ENCODE measurements at regions of chr9 and their contacts with region 1.

Region 1: DNA sequence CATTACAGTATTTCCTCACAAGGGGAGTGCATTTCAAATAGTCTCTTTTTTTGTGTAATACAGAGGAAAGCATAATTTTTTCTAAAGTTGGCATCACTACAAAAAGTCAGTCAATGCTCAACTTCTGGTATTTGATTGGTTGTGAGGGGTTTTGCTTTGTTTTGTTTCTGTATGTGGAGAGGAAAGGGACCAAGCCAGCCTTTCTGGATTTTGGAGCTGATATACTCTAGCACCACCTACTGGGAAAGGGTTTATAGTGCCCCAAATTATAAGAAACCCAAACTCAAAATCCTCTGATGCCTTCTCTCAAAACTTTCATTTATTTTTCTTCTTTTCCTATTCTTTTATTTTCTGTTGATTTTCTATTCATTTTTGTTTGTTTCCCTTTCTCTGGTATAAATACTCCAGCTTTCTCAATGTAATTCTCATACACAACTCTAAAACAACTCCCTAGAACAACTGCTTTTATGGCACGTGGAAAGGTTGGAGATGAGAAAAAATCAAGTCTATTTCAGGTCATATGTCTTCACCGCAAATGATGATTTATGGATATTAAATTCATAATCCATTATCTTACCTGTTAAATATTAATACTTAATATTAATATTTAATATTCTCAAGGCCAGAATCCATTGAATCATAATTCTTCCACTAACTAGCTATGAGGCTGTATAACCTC is 69.5 kb upstream of the ANXA1 start:
- DNase-seq: no peak
- H3K4me3 ChIP-seq: no peak overlapping the region
- H3K27ac ChIP-seq: no peak overlapping the region
- H3K4me1 ChIP-seq: peaks cover 0 to 16% of the 10 kb centered on the region in 2 donors
- H3K27me3 ChIP-seq: no peaks in the 10 kb centered on the region
- CTCF ChIP-seq: peak; percentile 68 to 84 (median 69)

Region 2: DNA sequence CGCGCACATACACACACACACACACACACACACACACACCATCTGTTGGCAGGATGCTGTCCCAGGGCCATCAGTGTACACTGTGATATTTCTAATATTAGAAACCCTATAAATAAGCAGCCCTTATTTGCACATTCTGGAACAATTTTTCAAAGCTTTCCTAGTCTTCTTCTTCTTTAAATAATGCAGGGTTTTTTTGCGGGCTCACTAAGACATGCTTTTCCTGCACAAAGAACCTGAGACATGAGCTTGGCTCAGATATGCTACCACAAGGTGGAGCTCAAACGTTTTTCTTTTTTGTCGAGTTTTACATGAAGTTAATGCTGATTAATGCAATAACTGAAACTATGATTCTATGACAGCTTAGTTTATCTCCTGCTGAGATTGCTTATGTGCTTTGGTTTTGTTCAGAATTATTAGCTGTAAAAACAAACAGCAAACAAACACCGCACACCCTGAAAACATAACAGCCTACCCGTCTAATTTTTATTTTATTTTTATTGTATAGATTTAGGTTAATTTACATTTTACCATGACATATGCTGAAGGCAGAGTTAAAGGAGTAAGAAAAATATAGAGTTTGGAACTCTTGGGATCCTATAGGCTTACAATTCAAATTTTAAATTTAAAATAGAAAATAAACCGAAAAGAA is 225.0 kb before region 1 on chr9:
- intact Hi-C with region 1: loop called (anchors 1 kb)
- DNase-seq: peak in 1 of 2 donors; percentile 73
- H3K4me3 ChIP-seq: no peak overlapping the region
- H3K27ac ChIP-seq: peak overlapping the region in 1 of 2 donors; percentile 36
- H3K4me1 ChIP-seq: peaks cover 0 to 9% of the 10 kb centered on the region in 2 donors
- H3K27me3 ChIP-seq: no peaks in the 10 kb centered on the region
- CTCF ChIP-seq: peak; percentile 58 to 74 (median 64)

Region 3: DNA sequence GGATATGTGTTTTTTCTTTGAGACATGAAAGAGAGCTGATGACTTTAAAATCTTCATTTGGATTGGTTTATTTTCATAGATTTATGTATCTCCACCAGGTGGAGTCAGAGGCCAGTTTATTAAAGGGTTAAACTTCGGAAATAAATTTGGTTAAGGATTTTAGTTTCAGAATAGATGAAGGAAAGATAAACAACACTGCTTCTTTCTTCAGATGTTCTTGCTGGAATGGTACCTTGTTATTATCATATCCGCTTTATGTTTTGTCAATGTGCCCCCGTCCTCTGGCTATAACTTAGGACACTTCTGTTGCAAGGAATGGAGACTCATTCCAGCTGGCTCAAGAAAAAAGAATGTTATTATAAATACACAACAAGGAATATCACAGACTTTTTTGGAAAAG is 210.4 kb before region 1 on chr9:
- intact Hi-C with region 1: loop called (anchors 5 kb)
- DNase-seq: no peak
- H3K4me3 ChIP-seq: no peak overlapping the region
- H3K27ac ChIP-seq: no peak overlapping the region
- H3K4me1 ChIP-seq: peaks cover 3 to 29% of the 10 kb centered on the region in 2 donors
- H3K27me3 ChIP-seq: no peaks in the 10 kb centered on the region
- CTCF ChIP-seq: peak in 2 of 3 experiments; percentile 6 to 30

Region 4: DNA sequence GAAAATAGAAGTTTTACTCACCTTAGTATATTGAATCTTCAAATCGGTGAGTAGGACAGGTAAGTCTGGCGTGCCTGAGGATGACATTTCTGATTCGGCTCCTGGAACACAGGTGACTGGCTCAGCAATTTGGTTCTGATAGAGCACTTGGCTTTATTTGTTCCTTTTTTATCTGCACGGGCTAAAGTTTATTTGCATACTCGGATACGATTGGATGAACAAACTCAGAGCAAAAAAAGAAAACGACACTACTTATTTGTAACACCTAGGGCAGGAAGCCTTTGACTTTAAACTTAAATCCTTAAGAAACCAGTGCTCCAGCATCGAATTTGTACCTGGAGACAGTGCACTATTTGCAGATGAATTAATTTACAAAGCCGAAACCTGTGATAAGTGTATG is 129.2 kb before region 1 on chr9 and contains the start of gene ALDH1A1:
- intact Hi-C with region 1: loop called (anchors 5 kb)
- DNase-seq: no peak
- H3K4me3 ChIP-seq: peak within 1 kb of the TSS; percentile 51 to 69
- H3K27ac ChIP-seq: peak within 1 kb of the TSS; percentile 76 to 91
- H3K4me1 ChIP-seq: peaks cover 0 to 4% of the 10 kb centered on the region in 2 donors
- H3K27me3 ChIP-seq: no peaks in the 10 kb centered on the region
- CTCF ChIP-seq: no peak
- total RNA-seq, gene ALDH1A1: 43.9 TPM

Region 5: GRCh38 chr9:73023025-73023541 is 59.0 kb before region 1 on chr9:
- intact Hi-C with region 1: loop called (anchors 5 kb)
- DNase-seq: peak in 1 of 2 donors; percentile 68
- H3K4me3 ChIP-seq: no peak overlapping the region
- H3K27ac ChIP-seq: no peak overlapping the region
- H3K4me1 ChIP-seq: no peaks in the 10 kb centered on the region
- H3K27me3 ChIP-seq: no peaks in the 10 kb centered on the region
- CTCF ChIP-seq: peak; percentile 79 to 86 (median 84)

Region 6: DNA sequence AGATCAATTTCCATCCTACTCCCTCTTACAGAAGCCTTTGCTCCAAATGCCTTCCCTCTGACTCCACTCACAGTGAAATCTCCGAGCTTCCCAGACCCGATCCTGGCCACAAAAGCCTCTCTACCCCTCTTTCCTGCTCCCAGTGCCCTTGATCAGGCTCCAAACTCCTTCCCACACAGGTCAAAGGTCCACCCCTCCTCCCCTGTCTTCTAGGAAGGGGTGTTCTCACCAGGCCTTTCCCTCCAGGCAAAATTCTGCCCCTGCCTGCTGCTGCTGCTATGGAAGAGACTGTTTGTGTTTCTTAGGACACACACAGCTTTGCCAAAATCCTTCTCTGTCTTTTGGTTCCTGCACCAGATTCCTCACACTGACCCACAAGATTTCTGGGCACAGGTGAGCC is 43.5 kb before region 1 on chr9:
- intact Hi-C with region 1: loop called (anchors 2 kb)
- DNase-seq: peak; percentile 10 to 73
- H3K4me3 ChIP-seq: peak overlapping the region in 1 of 2 donors; percentile 15
- H3K27ac ChIP-seq: peak overlapping the region; percentile 74 to 87
- H3K4me1 ChIP-seq: peaks cover 0 to 24% of the 10 kb centered on the region in 2 donors
- H3K27me3 ChIP-seq: no peaks in the 10 kb centered on the region
- CTCF ChIP-seq: no peak

Region 7: GRCh38 chr9:73219985-73220626 is 138.0 kb after region 1 on chr9:
- intact Hi-C with region 1: no loop called
- DNase-seq: no peak
- H3K4me3 ChIP-seq: no peak overlapping the region
- H3K27ac ChIP-seq: no peak overlapping the region
- H3K4me1 ChIP-seq: no peaks in the 10 kb centered on the region
- H3K27me3 ChIP-seq: no peaks in the 10 kb centered on the region
- CTCF ChIP-seq: no peak

Measured in ascending aorta (tissue), 2 donors.